GM12878 (cell line): ENCODE measurements at regions of chr15 and their contacts with region 1.

Region 1: DNA sequence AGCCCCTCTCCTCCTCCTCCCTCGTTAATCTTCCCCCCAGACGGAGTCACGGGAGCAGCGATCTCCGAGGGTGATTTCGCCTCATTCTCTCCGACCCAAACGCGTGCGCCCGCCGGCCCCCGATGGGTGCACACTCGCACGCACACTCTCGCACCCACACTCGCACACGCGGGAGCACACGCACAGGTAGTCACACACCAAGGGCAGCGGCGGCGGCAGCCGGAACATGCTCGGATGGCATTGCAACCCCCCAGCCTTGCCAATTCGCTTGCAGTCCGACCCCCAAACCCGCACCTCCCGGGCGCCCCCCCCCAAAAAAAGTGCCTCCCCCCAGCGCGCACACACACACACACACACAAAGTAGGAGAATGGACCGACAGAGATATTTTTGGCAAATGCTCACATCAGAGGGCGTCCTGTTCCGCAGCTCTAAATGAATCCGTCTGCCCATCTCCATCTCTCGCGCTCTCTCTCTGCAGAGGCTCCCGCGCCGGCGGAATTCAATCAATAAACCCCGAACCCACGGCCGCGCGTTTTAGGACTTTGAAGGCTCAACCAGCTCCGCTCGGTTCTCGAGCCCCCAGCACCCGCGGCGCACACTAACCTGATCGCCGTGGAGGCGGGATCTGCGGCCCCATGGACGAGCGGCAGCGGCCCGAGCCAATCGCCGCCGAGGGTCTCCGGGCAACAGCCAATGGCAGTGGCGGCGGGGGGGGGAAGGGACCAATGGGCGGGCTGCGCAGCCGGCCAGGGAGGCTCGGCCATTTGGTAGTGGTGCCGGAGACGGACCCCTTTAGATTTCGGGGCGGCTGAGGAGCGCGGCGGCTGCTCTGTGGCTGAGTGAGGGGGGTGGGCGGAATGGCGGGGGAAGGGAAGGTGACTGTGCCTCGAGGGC is at the start of gene ANP32A:
- DNase-seq: peak; percentile 62
- ATAC-seq: peak; percentile 74
- H3K4me3 ChIP-seq: peak within 1 kb of the TSS; percentile 98
- H3K27ac ChIP-seq: peak within 1 kb of the TSS; percentile 99
- H3K4me1 ChIP-seq: peaks cover 21% of the 10 kb centered on the region
- H3K27me3 ChIP-seq: no peaks in the 10 kb centered on the region
- CTCF ChIP-seq: no peak
- EP300 ChIP-seq: no peak
- POLR2A ChIP-seq: peak; percentile 89
- RAD21 ChIP-seq: no peak
- polyA plus RNA-seq, gene ANP32A: 29.6 to 35.3 TPM

Region 2: GRCh38 chr15:67542420-67543347 is 1277.9 kb before region 1 on chr15 and contains the start of gene MAP2K5:
- CTCF ChIA-PET with region 1: no interaction called
- POLR2A ChIA-PET with region 1: no interaction called
- RAD21 ChIA-PET with region 1: no interaction called
- SMC1A ChIA-PET with region 1: no interaction called
- in situ Hi-C with region 1: loop called (anchors 25 kb)
- intact Hi-C with region 1: no loop called
- DNase-seq: no peak
- ATAC-seq: peak; percentile 74
- H3K4me3 ChIP-seq: peak within 1 kb of the TSS; percentile 97
- H3K27ac ChIP-seq: peak within 1 kb of the TSS; percentile 91
- H3K4me1 ChIP-seq: peaks cover 26% of the 10 kb centered on the region
- H3K27me3 ChIP-seq: no peaks in the 10 kb centered on the region
- CTCF ChIP-seq: no peak
- EP300 ChIP-seq: no peak
- POLR2A ChIP-seq: peak; percentile 85
- RAD21 ChIP-seq: no peak
- polyA plus RNA-seq, gene MAP2K5: 1.3 to 2.0 TPM

Region 3: DNA sequence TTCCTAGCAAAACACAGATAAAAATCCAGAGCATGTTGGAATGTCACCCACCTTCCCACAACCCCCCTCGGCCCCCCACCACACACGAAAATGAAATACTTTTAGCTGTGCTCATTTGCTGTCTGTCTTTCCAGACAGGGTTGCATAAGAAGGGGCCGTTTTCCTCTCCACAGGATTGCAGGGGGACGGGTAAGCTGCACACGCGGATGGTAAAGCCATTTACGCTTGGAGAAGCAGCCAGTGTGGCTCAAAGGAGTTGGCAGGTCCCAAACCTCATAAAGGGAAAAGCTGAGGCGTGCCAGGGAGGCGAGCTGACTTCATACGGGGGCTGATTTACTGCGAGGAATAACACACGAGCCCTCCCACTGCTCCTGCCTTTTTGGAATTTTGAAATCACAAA is 341.1 kb before region 1 on chr15:
- CTCF ChIA-PET with region 1: no interaction called
- POLR2A ChIA-PET with region 1: no interaction called
- RAD21 ChIA-PET with region 1: no interaction called
- SMC1A ChIA-PET with region 1: no interaction called
- in situ Hi-C with region 1: no loop called
- intact Hi-C with region 1: no loop called
- DNase-seq: no peak
- ATAC-seq: no peak
- H3K4me3 ChIP-seq: no peak overlapping the region
- H3K27ac ChIP-seq: no peak overlapping the region
- H3K4me1 ChIP-seq: no peaks in the 10 kb centered on the region
- H3K27me3 ChIP-seq: no peaks in the 10 kb centered on the region; a peak in 1 of 4 replicates
- CTCF ChIP-seq: no peak
- EP300 ChIP-seq: no peak
- POLR2A ChIP-seq: no peak
- RAD21 ChIP-seq: no peak

Region 4: GRCh38 chr15:68783226-68784058 is 37.1 kb before region 1 on chr15:
- CTCF ChIA-PET with region 1: interaction called, 12 read pairs
- POLR2A ChIA-PET with region 1: no interaction called
- RAD21 ChIA-PET with region 1: interaction called, 5 read pairs
- SMC1A ChIA-PET with region 1: interaction called, 6 read pairs
- in situ Hi-C with region 1: no loop called
- intact Hi-C with region 1: no loop called
- DNase-seq: no peak
- ATAC-seq: peak; percentile 99
- H3K4me3 ChIP-seq: no peak overlapping the region
- H3K27ac ChIP-seq: no peak overlapping the region
- H3K4me1 ChIP-seq: peaks cover 9% of the 10 kb centered on the region
- H3K27me3 ChIP-seq: no peaks in the 10 kb centered on the region
- CTCF ChIP-seq: peak; percentile 69 to 83 (median 74)
- EP300 ChIP-seq: no peak
- POLR2A ChIP-seq: peak; percentile 30; the same call in 1 of the 2 replicates
- RAD21 ChIP-seq: peak; percentile 79

Region 5: GRCh38 chr15:69126054-69126469 is 305.5 kb after region 1 on chr15:
- CTCF ChIA-PET with region 1: no interaction called
- POLR2A ChIA-PET with region 1: no interaction called
- RAD21 ChIA-PET with region 1: no interaction called
- SMC1A ChIA-PET with region 1: no interaction called
- in situ Hi-C with region 1: no loop called
- intact Hi-C with region 1: no loop called
- DNase-seq: no peak
- ATAC-seq: no peak
- H3K4me3 ChIP-seq: no peak overlapping the region
- H3K27ac ChIP-seq: no peak overlapping the region
- H3K4me1 ChIP-seq: no peaks in the 10 kb centered on the region
- H3K27me3 ChIP-seq: no peaks in the 10 kb centered on the region
- CTCF ChIP-seq: no peak
- EP300 ChIP-seq: no peak
- POLR2A ChIP-seq: no peak
- RAD21 ChIP-seq: no peak